ENCODE measurements at regions of chr4 and their contacts with region 1.

Region 1: DNA sequence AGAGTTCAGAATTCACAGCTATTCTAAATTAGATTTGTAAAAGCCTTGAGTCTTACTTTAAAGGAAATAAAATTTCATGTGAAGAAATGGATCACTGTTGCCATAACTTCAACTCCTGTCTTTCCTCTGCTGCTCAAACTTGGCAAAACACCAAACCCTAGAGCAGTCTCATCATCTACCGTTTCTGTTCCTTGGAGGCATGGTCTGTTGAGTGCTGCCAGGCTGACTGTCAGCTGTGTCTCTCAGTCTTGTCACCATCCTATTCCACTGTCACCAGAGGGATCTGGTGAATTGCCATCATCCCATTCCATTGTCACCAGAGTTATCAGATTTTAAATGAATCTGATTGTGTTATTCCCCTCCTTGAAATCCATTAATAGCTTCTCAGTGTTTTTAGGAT is 55.6 kb downstream of the STIM2 start:
- DNase-seq: no peak
- H3K4me3 ChIP-seq: no peak overlapping the region
- H3K27ac ChIP-seq: no peak overlapping the region
- H3K4me1 ChIP-seq: peaks cover 24% of the 10 kb centered on the region
- CTCF ChIP-seq: no peak

Region 2: DNA sequence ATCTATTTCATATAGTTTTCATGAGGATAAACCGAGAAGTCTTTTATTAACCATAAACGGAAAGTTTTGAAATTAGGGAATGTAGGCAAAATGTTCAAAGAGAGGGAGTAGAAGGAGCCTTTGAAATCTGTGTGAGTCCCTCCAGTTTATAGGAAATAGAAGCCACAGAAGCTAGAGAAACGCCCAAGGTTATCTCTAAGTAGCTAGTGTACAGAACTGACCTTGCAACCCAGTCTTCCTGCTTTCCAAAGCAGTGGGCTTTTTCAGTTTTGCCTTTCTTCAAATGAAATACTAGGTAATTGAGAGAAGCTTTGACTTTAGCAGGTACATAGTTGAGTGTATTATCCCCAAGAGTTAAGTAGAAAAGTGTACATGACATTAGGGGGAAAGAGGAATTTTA is 16.2 kb before region 1 on chr4:
- CTCF ChIA-PET with region 1: no interaction called
- POLR2A ChIA-PET with region 1: interaction called, 12 read pairs
- intact Hi-C with region 1: no loop called
- DNase-seq: no peak
- H3K4me3 ChIP-seq: no peak overlapping the region
- H3K27ac ChIP-seq: no peak overlapping the region
- H3K4me1 ChIP-seq: peaks cover 64% of the 10 kb centered on the region
- CTCF ChIP-seq: no peak

Region 3: GRCh38 chr4:26936284-26937065 is 20.3 kb after region 1 on chr4:
- CTCF ChIA-PET with region 1: interaction called, 4 read pairs
- POLR2A ChIA-PET with region 1: interaction called, 14 read pairs
- intact Hi-C with region 1: no loop called
- DNase-seq: no peak
- H3K4me3 ChIP-seq: no peak overlapping the region
- H3K27ac ChIP-seq: peak overlapping the region; percentile 18
- H3K4me1 ChIP-seq: peaks cover 38% of the 10 kb centered on the region
- CTCF ChIP-seq: no peak

Region 4: GRCh38 chr4:27270435-27270834 is 354.2 kb after region 1 on chr4:
- CTCF ChIA-PET with region 1: no interaction called
- POLR2A ChIA-PET with region 1: no interaction called
- intact Hi-C with region 1: no loop called
- DNase-seq: no peak
- H3K4me3 ChIP-seq: no peak overlapping the region
- H3K27ac ChIP-seq: no peak overlapping the region
- H3K4me1 ChIP-seq: no peaks in the 10 kb centered on the region
- CTCF ChIP-seq: no peak